GM12878 (cell line): ENCODE measurements at regions of chr20 and their contacts with region 1.

Region 1: GRCh38 chr20:58388882-58389323 is at the start of gene VAPB:
- DNase-seq: peak; percentile 88
- ATAC-seq: peak; percentile 98
- H3K4me3 ChIP-seq: peak within 1 kb of the TSS; percentile 81
- H3K27ac ChIP-seq: peak within 1 kb of the TSS; percentile 91
- H3K4me1 ChIP-seq: peaks cover 13% of the 10 kb centered on the region
- H3K27me3 ChIP-seq: no peaks in the 10 kb centered on the region
- CTCF ChIP-seq: no peak
- EP300 ChIP-seq: no peak
- POLR2A ChIP-seq: peak; percentile 87
- RAD21 ChIP-seq: no peak
- polyA plus RNA-seq, gene VAPB: 3.2 to 10.7 TPM

Region 2: DNA sequence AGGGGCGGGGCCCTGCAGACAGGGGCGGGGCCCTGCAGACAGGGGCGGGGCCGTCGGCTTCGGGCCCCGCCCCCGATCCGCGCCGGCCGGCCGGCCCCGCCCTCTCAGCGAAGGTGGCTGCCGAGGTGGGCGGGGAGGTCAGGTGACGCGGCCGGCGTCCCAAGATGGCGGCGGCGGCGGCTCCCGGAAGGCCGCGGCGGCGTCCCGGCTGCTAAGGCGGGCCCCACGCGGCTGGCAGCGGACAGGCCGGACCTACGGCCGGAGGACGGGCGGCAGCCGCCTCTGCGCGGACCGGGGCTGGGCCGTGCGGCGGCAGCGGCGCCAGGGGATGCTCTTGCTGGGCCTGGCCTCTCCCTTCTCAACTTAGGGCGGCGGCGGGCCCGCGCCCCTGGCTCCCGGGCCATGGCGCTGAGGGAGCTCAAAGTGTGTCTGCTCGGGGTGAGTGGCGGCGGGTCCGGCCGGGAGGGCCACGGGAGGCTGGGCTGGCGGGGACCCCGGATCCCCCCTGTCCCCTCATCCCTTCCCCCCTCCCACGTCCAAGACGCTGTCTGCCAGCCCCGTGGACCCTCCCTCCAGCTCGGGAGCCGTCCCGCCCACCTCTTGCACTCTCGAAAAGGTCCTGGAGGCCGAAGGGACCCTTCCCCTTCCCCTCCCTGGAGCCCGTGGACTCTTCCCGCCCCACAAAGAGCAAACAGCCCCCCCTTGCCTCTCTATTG is 79.2 kb before region 1 on chr20 and contains the start of gene RAB22A:
- CTCF ChIA-PET with region 1: no interaction called
- POLR2A ChIA-PET with region 1: interaction called, 8 read pairs
- RAD21 ChIA-PET with region 1: no interaction called
- SMC1A ChIA-PET with region 1: no interaction called
- in situ Hi-C with region 1: no loop called
- intact Hi-C with region 1: loop called (anchors 5 kb)
- DNase-seq: no peak
- ATAC-seq: peak; percentile 73
- H3K4me3 ChIP-seq: peak within 1 kb of the TSS; percentile 100
- H3K27ac ChIP-seq: peak within 1 kb of the TSS; percentile 65
- H3K4me1 ChIP-seq: peaks cover 16% of the 10 kb centered on the region; the same call in 1 of the 2 replicates
- H3K27me3 ChIP-seq: no peaks in the 10 kb centered on the region
- CTCF ChIP-seq: no peak
- EP300 ChIP-seq: no peak
- POLR2A ChIP-seq: peak; percentile 96
- RAD21 ChIP-seq: no peak
- polyA plus RNA-seq, gene RAB22A: 2.7 to 3.7 TPM

Region 3: DNA sequence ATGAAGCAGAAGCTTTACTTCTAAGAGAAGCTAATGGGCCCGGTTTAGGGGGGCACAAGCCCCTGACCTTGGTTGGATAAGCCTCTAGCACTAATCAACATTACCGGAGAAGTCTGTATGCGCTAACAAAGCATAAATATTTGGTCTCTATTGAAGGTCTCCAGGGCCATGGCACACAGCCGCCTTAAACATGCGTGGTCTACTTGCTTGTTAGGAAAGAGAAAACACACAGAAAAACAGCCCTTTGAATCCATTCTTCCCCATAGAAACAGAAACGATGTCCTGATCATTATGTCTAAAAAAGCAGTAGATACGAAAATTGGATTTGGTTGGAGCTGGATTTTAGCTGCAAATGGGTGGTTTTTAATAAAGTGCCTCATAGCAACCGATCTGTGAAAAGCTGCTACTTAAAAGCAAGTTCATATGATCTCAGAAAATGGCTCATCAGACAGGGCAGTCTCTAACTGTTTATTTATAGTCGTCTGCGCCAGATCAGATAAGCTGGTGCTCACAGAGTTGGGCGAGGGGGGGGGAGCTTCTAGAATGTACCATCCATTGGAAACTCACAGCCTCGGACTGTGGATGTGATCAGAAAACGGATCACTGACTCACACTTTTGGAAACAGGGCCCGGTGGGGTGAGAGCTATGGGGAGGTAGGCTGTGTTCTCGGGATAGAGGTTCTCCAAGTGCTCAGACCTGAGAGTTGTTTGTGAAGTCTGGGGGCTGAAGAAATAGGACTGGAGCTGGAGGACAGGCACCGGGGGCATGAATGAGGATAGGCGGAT is 161.6 kb after region 1 on chr20:
- CTCF ChIA-PET with region 1: no interaction called
- POLR2A ChIA-PET with region 1: no interaction called
- RAD21 ChIA-PET with region 1: no interaction called
- SMC1A ChIA-PET with region 1: no interaction called
- in situ Hi-C with region 1: no loop called
- intact Hi-C with region 1: no loop called
- DNase-seq: no peak
- ATAC-seq: no peak
- H3K4me3 ChIP-seq: no peak overlapping the region
- H3K27ac ChIP-seq: no peak overlapping the region
- H3K4me1 ChIP-seq: no peaks in the 10 kb centered on the region
- H3K27me3 ChIP-seq: no peaks in the 10 kb centered on the region
- CTCF ChIP-seq: no peak
- EP300 ChIP-seq: no peak
- POLR2A ChIP-seq: no peak
- RAD21 ChIP-seq: no peak